ENCODE measurements at regions of chr10 and their contacts with region 1.

Region 1: GRCh38 chr10:92517034-92517655 is 56.7 kb downstream of the IDE start:
- H3K4me3 ChIP-seq: no peak overlapping the region
- H3K27ac ChIP-seq: no peak overlapping the region
- H3K4me1 ChIP-seq: no peaks in the 10 kb centered on the region
- CTCF ChIP-seq: 0 out of 2 replicates have a peak, but pooled peaks have one; percentile 33

Region 2: DNA sequence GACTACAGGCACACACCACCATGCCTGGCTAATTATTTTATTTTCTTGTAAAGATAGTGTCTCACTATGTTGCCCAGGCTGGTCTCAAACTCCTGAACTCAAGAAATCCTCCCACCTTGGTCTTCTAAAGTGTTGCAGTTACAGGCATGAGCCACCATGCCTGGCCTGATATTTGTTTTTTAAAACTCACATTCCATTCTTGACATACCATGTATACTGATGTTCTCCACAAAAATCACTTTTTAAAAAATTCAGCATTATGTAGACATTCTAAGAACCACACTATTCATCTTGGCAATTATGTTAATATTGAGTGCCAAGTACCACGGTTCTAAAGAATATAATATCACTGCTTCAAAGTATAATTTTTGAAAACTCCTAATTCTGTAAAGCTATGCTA is 13.3 kb after region 1 on chr10:
- CTCF ChIA-PET with region 1: interaction called, 28 read pairs
- POLR2A ChIA-PET with region 1: no interaction called
- H3K4me3 ChIP-seq: no peak overlapping the region
- H3K27ac ChIP-seq: no peak overlapping the region
- H3K4me1 ChIP-seq: peaks cover 6% of the 10 kb centered on the region; the same call in 1 of the 2 replicates
- CTCF ChIP-seq: no peak

Region 3: GRCh38 chr10:92538231-92538958 is 21.2 kb after region 1 on chr10:
- CTCF ChIA-PET with region 1: interaction called, 20 read pairs
- POLR2A ChIA-PET with region 1: no interaction called
- H3K4me3 ChIP-seq: no peak overlapping the region
- H3K27ac ChIP-seq: no peak overlapping the region
- H3K4me1 ChIP-seq: peaks cover 18% of the 10 kb centered on the region
- CTCF ChIP-seq: no peak

Region 4: DNA sequence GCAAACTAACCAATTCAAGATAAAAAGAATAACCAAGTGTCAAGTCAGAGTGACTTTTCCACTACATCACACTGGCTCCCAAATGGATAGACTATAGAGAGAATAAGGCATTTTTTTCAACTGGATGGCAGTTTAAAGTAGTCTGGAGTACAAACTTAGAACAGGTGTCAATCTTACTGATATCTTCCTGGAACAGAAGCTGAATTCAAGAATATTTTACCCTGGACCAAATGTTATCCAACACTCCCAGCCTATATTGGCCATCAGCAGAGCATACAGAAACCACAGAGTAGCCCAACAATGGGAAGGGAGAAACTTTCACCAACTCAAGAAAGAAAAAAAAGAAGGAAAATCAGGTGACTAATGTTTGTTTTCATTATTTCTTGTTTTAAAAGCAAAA is 45.3 kb after region 1 on chr10:
- CTCF ChIA-PET with region 1: interaction called, 13 read pairs
- POLR2A ChIA-PET with region 1: interaction called, 9 read pairs
- H3K4me3 ChIP-seq: no peak overlapping the region
- H3K27ac ChIP-seq: no peak overlapping the region
- H3K4me1 ChIP-seq: 0 out of 2 replicates have a peak, but pooled peaks cover 3% of the 10 kb centered on the region
- CTCF ChIP-seq: no peak

Region 5: DNA sequence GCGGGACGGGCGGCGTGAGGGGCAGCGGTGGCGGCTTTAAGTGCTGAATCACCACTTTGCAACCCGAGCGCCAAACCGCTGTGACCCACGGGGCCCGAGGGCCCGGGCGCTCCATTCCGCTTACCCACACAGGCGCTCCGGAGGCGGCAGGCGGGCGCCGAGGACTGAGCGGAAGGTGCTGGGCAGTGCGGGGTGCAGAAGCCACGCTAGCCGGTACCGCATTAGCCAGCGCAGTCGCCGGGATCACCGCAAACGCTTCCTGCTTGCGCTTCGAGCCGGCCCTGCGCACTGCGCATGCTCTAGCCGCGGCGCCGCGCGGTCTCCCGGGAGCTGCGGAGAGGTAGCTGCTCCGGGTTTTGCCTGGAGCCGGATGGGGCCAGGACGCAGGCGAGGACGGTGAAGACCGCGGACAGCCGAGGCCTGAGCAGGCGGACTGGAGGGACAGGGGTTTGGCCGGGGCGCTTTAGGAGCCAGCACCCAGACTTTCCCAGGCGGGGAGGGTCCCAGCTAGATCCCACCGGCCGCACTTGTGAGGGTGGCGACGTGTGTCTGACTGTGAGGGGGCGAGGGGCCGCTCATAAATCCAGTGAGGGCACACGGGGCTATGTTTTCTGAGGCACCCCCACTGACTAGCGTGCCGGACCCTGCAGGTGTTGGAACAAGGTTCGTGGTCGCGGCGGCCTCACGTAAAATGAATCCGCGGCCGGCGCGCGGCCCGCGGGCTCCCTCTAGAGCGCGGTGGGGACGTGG is 56.8 kb after region 1 on chr10 and contains the start of gene IDE:
- CTCF ChIA-PET with region 1: interaction called, 71 read pairs
- POLR2A ChIA-PET with region 1: interaction called, 9 read pairs
- H3K4me3 ChIP-seq: peak within 1 kb of the TSS; percentile 84
- H3K27ac ChIP-seq: peak within 1 kb of the TSS; percentile 95
- H3K4me1 ChIP-seq: peaks cover 13% of the 10 kb centered on the region
- CTCF ChIP-seq: peak; percentile 93

Region 6: DNA sequence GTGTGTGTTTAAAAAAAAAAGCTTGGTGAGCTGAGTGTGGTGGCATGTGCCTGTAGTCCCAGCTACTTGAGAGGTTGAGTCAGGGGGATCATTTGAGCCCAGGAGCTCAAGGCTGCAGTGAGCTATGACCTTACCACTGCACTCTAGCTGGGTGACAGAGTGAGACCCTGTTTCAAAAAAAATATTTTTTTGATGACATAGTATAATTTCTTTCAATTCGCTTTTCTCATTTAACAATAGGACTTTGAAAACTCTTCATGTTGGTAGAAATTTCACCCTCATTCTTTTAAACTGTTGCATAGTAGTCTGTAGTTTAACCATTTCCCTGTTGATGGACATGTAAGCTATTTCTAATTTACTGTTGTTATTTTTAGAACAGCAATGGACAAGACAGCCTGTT is 275.5 kb after region 1 on chr10:
- CTCF ChIA-PET with region 1: no interaction called
- POLR2A ChIA-PET with region 1: no interaction called
- H3K4me3 ChIP-seq: no peak overlapping the region
- H3K27ac ChIP-seq: no peak overlapping the region
- H3K4me1 ChIP-seq: no peaks in the 10 kb centered on the region
- CTCF ChIP-seq: no peak

Region 7: GRCh38 chr10:94065344-94065743 is 1548.2 kb after region 1 on chr10:
- CTCF ChIA-PET with region 1: no interaction called
- POLR2A ChIA-PET with region 1: no interaction called
- H3K4me3 ChIP-seq: no peak overlapping the region
- H3K27ac ChIP-seq: no peak overlapping the region
- H3K4me1 ChIP-seq: peaks cover 9% of the 10 kb centered on the region
- CTCF ChIP-seq: no peak

Measured in HEK293 (cell line).